Spleen (tissue), 13 donors: ENCODE measurements at regions of chr3 and their contacts with region 1.

Region 1: GRCh38 chr3:27681245-27681748 is 40.8 kb downstream of the EOMES start:
- DNase-seq: no peak
- H3K4me3 ChIP-seq: peak overlapping the region in 2 of 8 donors; percentile 22 to 42
- H3K27ac ChIP-seq: peak overlapping the region in 5 of 8 donors; percentile 11 to 56 (median 26)
- H3K4me1 ChIP-seq: peaks cover 0 to 20% (median 11%) of the 10 kb centered on the region in 6 donors
- H3K27me3 ChIP-seq: no peaks in the 10 kb centered on the region
- CTCF ChIP-seq: peak; percentile 37 to 88 (median 63)
- POLR2A ChIP-seq: no peak

Region 2: GRCh38 chr3:27312044-27312668 is 369.1 kb before region 1 on chr3:
- intact Hi-C with region 1: loop called (anchors 5 kb)
- DNase-seq: no peak
- H3K4me3 ChIP-seq: no peak overlapping the region
- H3K27ac ChIP-seq: no peak overlapping the region
- H3K4me1 ChIP-seq: peaks cover 0 to 3% (median 0%) of the 10 kb centered on the region in 6 donors
- H3K27me3 ChIP-seq: no peaks in the 10 kb centered on the region
- CTCF ChIP-seq: peak; percentile 64 to 86 (median 81)
- POLR2A ChIP-seq: no peak

Region 3: GRCh38 chr3:27357665-27358258 is 323.5 kb before region 1 on chr3:
- intact Hi-C with region 1: loop called (anchors 5 kb)
- DNase-seq: no peak
- H3K4me3 ChIP-seq: no peak overlapping the region
- H3K27ac ChIP-seq: peak overlapping the region in 4 of 8 donors; percentile 72 to 79 (median 76)
- H3K4me1 ChIP-seq: peaks cover 24 to 47% (median 35%) of the 10 kb centered on the region in 6 donors
- H3K27me3 ChIP-seq: no peaks in the 10 kb centered on the region
- CTCF ChIP-seq: peak in 10 of 11 experiments; percentile 42 to 73 (median 65)
- POLR2A ChIP-seq: no peak

Region 4: GRCh38 chr3:27479806-27480543 is 201.3 kb before region 1 on chr3:
- intact Hi-C with region 1: loop called (anchors 10 kb)
- DNase-seq: no peak
- H3K4me3 ChIP-seq: peak overlapping the region in 1 of 8 donors; percentile 38
- H3K27ac ChIP-seq: peak overlapping the region in 7 of 8 donors; percentile 40 to 86 (median 68)
- H3K4me1 ChIP-seq: peaks cover 26 to 61% (median 51%) of the 10 kb centered on the region in 6 donors
- H3K27me3 ChIP-seq: no peaks in the 10 kb centered on the region
- CTCF ChIP-seq: no peak
- POLR2A ChIP-seq: no peak